Sigmoid colon (tissue), 7 donors: ENCODE measurements at regions of chr10 and their contacts with region 1.

Region 1: GRCh38 chr10:11165591-11166543 is 148.2 kb downstream of the CELF2 start:
- DNase-seq: peak; percentile 89
- H3K4me3 ChIP-seq: peak overlapping the region; percentile 50 to 84 (median 77)
- H3K27ac ChIP-seq: peak overlapping the region; percentile 82 to 92 (median 86)
- H3K4me1 ChIP-seq: peaks cover 0 to 57% (median 39%) of the 10 kb centered on the region in 4 donors
- H3K27me3 ChIP-seq: no peaks in the 10 kb centered on the region
- CTCF ChIP-seq: peak; percentile 14 to 58 (median 43)
- EP300 ChIP-seq: no peak
- POLR2A ChIP-seq: no peak

Region 2: DNA sequence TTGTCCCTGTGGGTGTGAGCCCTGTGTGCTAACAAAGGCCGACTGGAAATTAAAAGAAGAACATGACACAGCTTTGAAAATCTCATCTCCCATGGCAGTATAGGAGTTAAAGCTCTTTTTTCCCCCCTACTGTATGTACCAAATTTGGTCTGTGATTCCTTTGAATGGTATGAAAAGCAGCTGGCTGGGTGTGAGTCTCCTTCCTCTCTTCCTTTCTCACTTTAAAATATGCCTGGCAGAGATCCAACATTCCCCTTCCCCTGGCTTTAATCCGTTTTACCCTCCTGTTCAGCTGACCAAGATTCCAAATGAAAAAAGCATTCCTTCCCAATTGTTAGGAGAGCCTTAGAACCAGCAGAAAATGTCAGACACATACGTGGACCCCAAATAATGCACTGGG is 373.2 kb before region 1 on chr10:
- intact Hi-C with region 1: loop called (anchors 10 kb)
- DNase-seq: no peak
- H3K4me3 ChIP-seq: no peak overlapping the region
- H3K27ac ChIP-seq: peak overlapping the region in 2 of 4 donors; percentile 44 to 50
- H3K4me1 ChIP-seq: peaks cover 0 to 37% (median 27%) of the 10 kb centered on the region in 4 donors
- H3K27me3 ChIP-seq: no peaks in the 10 kb centered on the region
- CTCF ChIP-seq: no peak
- EP300 ChIP-seq: no peak
- POLR2A ChIP-seq: no peak

Region 3: GRCh38 chr10:11086177-11086865 is 79.5 kb before region 1 on chr10:
- intact Hi-C with region 1: loop called (anchors 5 kb)
- DNase-seq: peak; percentile 80
- H3K4me3 ChIP-seq: no peak overlapping the region
- H3K27ac ChIP-seq: peak overlapping the region in 3 of 4 donors; percentile 1 to 60 (median 60)
- H3K4me1 ChIP-seq: peaks cover 0 to 30% (median 21%) of the 10 kb centered on the region in 4 donors
- H3K27me3 ChIP-seq: no peaks in the 10 kb centered on the region
- CTCF ChIP-seq: no peak
- EP300 ChIP-seq: peak in 1 of 4 donors; percentile 33
- POLR2A ChIP-seq: no peak